K562 (cell line): ENCODE measurements at regions of chr7 and their contacts with region 1.

Region 1: DNA sequence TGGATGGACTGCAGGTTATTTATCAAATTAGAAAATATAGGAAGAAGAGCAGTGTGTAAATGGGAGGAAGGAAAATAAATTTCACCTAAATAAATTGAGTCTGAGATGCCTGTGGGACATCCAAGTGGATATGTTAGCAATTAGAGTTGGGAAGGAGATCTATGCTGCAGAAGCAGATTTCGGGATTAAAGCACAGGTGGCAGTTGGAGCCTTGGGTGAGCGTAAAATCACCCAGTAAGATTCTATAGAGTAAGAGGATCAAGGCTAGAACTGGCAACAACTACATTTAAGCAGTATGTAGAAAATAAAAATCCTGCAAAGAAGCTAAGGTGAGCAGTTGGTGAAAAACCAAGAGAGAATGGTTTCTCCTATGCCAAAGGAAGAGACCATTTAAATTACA is 8.4 kb downstream of the TRIM4 start:
- DNase-seq: no peak
- ATAC-seq: no peak
- H3K4me3 ChIP-seq: no peak overlapping the region
- H3K27ac ChIP-seq: no peak overlapping the region
- H3K4me1 ChIP-seq: no peaks in the 10 kb centered on the region
- H3K27me3 ChIP-seq: no peaks in the 10 kb centered on the region
- CTCF ChIP-seq: no peak
- EP300 ChIP-seq: no peak
- POLR2A ChIP-seq: no peak
- RAD21 ChIP-seq: no peak

Region 2: DNA sequence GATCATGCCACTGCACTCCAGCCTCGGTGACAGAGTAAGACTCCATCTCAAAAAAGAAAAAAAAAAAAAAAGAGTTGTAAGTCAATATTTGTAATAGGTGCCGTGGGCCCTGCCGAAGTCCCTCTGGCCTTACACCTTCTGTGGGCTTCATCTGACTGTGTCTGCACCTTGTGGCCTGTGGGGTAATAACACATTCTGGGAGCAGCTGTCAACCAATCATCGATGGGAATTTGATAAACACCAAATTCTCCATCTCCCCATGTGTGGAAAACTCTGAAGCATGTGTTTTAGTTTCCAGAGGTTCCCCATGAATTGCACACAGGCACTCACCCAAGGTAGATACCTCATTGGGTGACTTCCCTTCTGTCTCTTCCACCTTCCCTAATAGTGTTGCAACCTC is 421.7 kb before region 1 on chr7:
- CTCF ChIA-PET with region 1: no interaction called
- POLR2A ChIA-PET with region 1: no interaction called
- in situ Hi-C with region 1: no loop called
- intact Hi-C with region 1: no loop called
- DNase-seq: peak in 3 of 4 experiments; percentile 41 to 56 (median 44)
- ATAC-seq: peak; percentile 82
- H3K4me3 ChIP-seq: no peak overlapping the region
- H3K27ac ChIP-seq: no peak overlapping the region
- H3K4me1 ChIP-seq: no peaks in the 10 kb centered on the region
- H3K27me3 ChIP-seq: no peaks in the 10 kb centered on the region
- CTCF ChIP-seq: peak in 2 of 3 experiments; percentile 3 to 17; a peak in 3 of 6 replicates
- EP300 ChIP-seq: no peak
- POLR2A ChIP-seq: no peak
- RAD21 ChIP-seq: no peak

Region 3: DNA sequence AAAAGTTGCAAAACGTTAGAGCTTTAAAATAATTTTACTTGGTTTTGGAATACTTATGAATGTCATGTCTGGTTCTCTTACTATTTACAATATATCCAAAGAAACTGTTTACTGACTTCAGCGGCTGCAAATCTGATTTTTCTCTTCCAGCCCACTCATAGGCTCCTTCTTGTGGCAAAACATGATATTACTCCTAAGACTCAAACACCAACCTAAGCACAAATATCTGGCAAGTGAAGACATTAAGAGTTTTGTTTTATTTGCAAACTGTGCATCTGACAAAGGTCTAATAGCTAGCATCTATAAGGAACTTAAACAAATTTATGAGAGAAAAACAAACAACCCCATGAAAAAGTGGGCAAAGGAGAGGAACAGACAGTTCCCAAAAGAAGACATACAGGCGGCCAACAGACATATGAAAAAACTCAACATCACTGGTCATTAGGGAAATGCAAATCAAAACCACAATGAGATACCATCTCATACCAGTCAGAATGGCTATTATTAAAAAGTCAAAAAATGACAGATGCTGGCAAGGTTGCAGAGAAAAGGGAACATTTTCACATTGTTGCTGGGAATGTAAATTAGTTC is 38.8 kb after region 1 on chr7:
- CTCF ChIA-PET with region 1: interaction called, 3 read pairs
- POLR2A ChIA-PET with region 1: no interaction called
- in situ Hi-C with region 1: no loop called
- intact Hi-C with region 1: loop called (anchors 1 kb)
- DNase-seq: peak in 1 of 4 experiments; percentile 17
- ATAC-seq: no peak
- H3K4me3 ChIP-seq: no peak overlapping the region
- H3K27ac ChIP-seq: no peak overlapping the region
- H3K4me1 ChIP-seq: no peaks in the 10 kb centered on the region
- H3K27me3 ChIP-seq: peaks cover 6 to 8% of the 10 kb centered on the region in 2 experiments; a peak in 2 of 5 replicates
- CTCF ChIP-seq: peak; percentile 25 to 49 (median 37); a peak in 4 of 6 replicates
- EP300 ChIP-seq: no peak
- POLR2A ChIP-seq: no peak
- RAD21 ChIP-seq: peak in 1 of 2 experiments; percentile 30; a peak in 2 of 4 replicates